Activated T-helper 1 cell treated with anti-CD3 and anti-CD28 coated beads, Interleukin-12 subunit alpha, Interleukin-12 subunit beta, Interleukin-2, Interleukin-4 antibody, amounts not matched to agents 30 ng/mL and 10 ng/mL and 1 ng/mL, durations not matched to agents 14 hours and 24 hours and 36 hours (primary cell): ENCODE measurements at regions of chr9 and their contacts with region 1.

Region 1: GRCh38 chr9:20684035-20684872 is at the start of gene FOCAD:
- DNase-seq: peak; percentile 96
- H3K4me3 Mint-ChIP-seq: peak within 1 kb of the TSS; percentile 89
- H3K27ac Mint-ChIP-seq: peak within 1 kb of the TSS; percentile 79
- H3K4me1 Mint-ChIP-seq: peaks cover 33% of the 10 kb centered on the region
- H3K27me3 Mint-ChIP-seq: no peaks in the 10 kb centered on the region
- total RNA-seq, gene FOCAD: 31.2 and 33.7 TPM in 2 replicates

Region 2: DNA sequence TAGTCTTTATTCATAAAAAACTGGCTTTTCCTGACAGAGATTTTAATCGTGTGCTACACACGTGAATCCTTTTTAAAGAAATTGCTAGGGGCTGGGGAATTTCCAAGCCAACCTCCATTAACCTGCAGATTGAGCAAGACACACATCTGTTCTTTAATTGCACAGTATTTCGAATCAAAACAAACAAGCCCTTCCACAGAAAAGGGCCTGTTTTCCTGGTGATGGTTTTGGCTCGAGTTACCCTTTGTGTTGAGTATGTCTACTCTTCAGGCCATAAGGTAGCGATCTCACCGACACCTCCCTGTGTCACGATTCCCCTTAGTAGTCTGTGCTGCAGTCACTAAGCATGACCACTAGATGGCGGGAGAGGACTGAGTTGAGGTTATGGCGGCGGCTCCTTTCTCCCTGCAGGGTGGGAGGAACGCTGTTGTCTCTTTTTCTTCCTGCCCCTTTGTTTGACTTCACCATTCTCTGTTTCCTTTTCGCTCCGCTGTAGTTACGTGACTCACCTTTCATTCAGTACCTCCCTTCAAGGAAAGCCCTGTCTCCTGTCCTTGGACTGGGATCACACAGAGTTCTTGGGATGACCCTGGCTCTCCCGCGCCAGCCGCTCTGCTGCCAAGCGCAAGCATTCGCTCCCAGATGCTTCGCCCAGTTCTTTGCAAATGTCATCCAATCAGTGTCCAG is 758.3 kb before region 1 on chr9:
- intact Hi-C with region 1: loop called (anchors 5 kb)
- DNase-seq: peak; percentile 79
- H3K4me3 Mint-ChIP-seq: peak overlapping the region; percentile 65
- H3K27ac Mint-ChIP-seq: peak overlapping the region; percentile 2
- H3K4me1 Mint-ChIP-seq: peaks cover 28% of the 10 kb centered on the region
- H3K27me3 Mint-ChIP-seq: peaks cover 2% of the 10 kb centered on the region

Region 3: GRCh38 chr9:20242510-20243189 is 441.6 kb before region 1 on chr9:
- intact Hi-C with region 1: loop called (anchors 1 kb)
- DNase-seq: peak; percentile 36
- H3K4me3 Mint-ChIP-seq: peak overlapping the region; percentile 36
- H3K27ac Mint-ChIP-seq: peak overlapping the region; percentile 27
- H3K4me1 Mint-ChIP-seq: peaks cover 65% of the 10 kb centered on the region
- H3K27me3 Mint-ChIP-seq: peaks cover 2% of the 10 kb centered on the region

Region 4: DNA sequence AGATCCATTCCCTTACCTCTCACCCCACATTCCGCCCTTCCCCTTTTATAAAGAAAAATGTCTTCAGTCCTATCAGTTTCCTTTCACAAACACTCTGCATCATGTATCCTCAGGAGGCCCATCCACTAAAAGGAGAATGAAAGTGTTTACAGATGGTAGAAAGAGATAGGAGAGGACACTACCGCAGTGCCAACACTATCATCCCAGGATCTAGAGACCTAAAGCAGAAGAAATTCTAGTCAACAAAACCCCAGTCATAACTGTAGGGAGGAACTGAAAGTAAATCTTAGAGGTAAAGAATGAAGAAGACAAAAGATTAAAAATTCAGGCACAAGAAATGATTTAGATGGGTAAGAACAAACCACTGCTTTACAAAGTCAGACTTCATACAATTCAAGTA is 176.0 kb before region 1 on chr9:
- intact Hi-C with region 1: loop called (anchors 1 kb)
- DNase-seq: peak; percentile 30
- H3K4me3 Mint-ChIP-seq: peak overlapping the region; percentile 13
- H3K27ac Mint-ChIP-seq: peak overlapping the region; percentile 5
- H3K4me1 Mint-ChIP-seq: peaks cover 77% of the 10 kb centered on the region
- H3K27me3 Mint-ChIP-seq: no peaks in the 10 kb centered on the region

Region 5: GRCh38 chr9:20558566-20559016 is 125.7 kb before region 1 on chr9:
- intact Hi-C with region 1: loop called (anchors 2 kb)
- DNase-seq: peak; percentile 18
- H3K4me3 Mint-ChIP-seq: peak overlapping the region; percentile 20
- H3K27ac Mint-ChIP-seq: peak overlapping the region; percentile 47
- H3K4me1 Mint-ChIP-seq: peaks cover 83% of the 10 kb centered on the region
- H3K27me3 Mint-ChIP-seq: no peaks in the 10 kb centered on the region

Region 6: DNA sequence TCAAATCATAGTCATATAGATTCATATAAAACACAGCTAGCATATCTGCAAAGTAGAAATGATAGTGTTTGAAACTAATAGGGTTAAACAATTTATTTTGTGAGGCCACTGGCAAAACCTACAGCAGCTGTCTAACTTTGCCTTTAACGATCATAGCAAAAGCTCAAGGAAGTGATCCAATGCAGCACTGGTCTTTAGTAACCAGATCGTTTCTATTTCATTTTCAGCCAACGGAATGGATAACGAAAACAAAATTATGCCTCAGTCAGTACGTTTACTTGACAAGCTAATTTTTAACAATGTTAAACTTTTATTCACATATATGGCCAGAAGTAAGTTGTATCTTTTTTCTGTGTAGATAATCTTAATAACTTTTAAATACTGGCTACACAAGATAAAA is 79.7 kb before region 1 on chr9:
- intact Hi-C with region 1: no loop called
- DNase-seq: no peak
- H3K4me3 Mint-ChIP-seq: peak overlapping the region; percentile 67
- H3K27ac Mint-ChIP-seq: peak overlapping the region; percentile 49
- H3K4me1 Mint-ChIP-seq: peaks cover 71% of the 10 kb centered on the region
- H3K27me3 Mint-ChIP-seq: no peaks in the 10 kb centered on the region

Region 7: GRCh38 chr9:20658677-20659473 is 25.4 kb before region 1 on chr9:
- intact Hi-C with region 1: loop called (anchors 2 kb)
- DNase-seq: no peak
- H3K4me3 Mint-ChIP-seq: no peak overlapping the region
- H3K27ac Mint-ChIP-seq: peak overlapping the region; percentile 71
- H3K4me1 Mint-ChIP-seq: no peaks in the 10 kb centered on the region
- H3K27me3 Mint-ChIP-seq: peaks cover 3% of the 10 kb centered on the region

Region 8: GRCh38 chr9:21334701-21335632 is 650.7 kb after region 1 on chr9 and contains the start of gene KLHL9:
- intact Hi-C with region 1: loop called (anchors 10 kb)
- DNase-seq: peak; percentile 75
- H3K4me3 Mint-ChIP-seq: peak within 1 kb of the TSS; percentile 92
- H3K27ac Mint-ChIP-seq: peak within 1 kb of the TSS; percentile 85
- H3K4me1 Mint-ChIP-seq: peaks cover 32% of the 10 kb centered on the region
- H3K27me3 Mint-ChIP-seq: peaks cover 13% of the 10 kb centered on the region
- total RNA-seq, gene KLHL9: 14.1 and 15.6 TPM in 2 replicates